ENCODE measurements at regions of chr1 and their contacts with region 1.

Region 1: GRCh38 chr1:230978491-230979388 is at the starts of genes ARV1 and TTC13:
- DNase-seq: peak; percentile 99
- H3K4me3 Mint-ChIP-seq: peak within 1 kb of the TSS; percentile 89
- H3K27ac Mint-ChIP-seq: peak within 1 kb of the TSS; percentile 92
- H3K4me1 Mint-ChIP-seq: peaks cover 31% of the 10 kb centered on the region
- H3K27me3 Mint-ChIP-seq: no peaks in the 10 kb centered on the region
- total RNA-seq, gene ARV1: 15.0 and 15.2 TPM in 2 replicates
- total RNA-seq, gene TTC13: 22.7 and 23.8 TPM in 2 replicates

Region 2: GRCh38 chr1:230642263-230642959 is 336.3 kb before region 1 on chr1 and contains the start of gene COG2:
- intact Hi-C with region 1: loop called (anchors 1 kb)
- DNase-seq: peak; percentile 99
- H3K4me3 Mint-ChIP-seq: peak within 1 kb of the TSS; percentile 96
- H3K27ac Mint-ChIP-seq: peak within 1 kb of the TSS; percentile 98
- H3K4me1 Mint-ChIP-seq: peaks cover 35% of the 10 kb centered on the region
- H3K27me3 Mint-ChIP-seq: peaks cover 18% of the 10 kb centered on the region
- total RNA-seq, gene COG2: 44.1 and 47.4 TPM in 2 replicates

Region 3: GRCh38 chr1:230917284-230918135 is 61.2 kb before region 1 on chr1:
- intact Hi-C with region 1: loop called (anchors 1 kb)
- DNase-seq: peak; percentile 91
- H3K4me3 Mint-ChIP-seq: no peak overlapping the region
- H3K27ac Mint-ChIP-seq: no peak overlapping the region
- H3K4me1 Mint-ChIP-seq: peaks cover 7% of the 10 kb centered on the region
- H3K27me3 Mint-ChIP-seq: no peaks in the 10 kb centered on the region

Region 4: GRCh38 chr1:231240883-231241735 is 262.4 kb after region 1 on chr1 and contains the start of gene GNPAT:
- intact Hi-C with region 1: loop called (anchors 1 kb)
- DNase-seq: peak; percentile 98
- H3K4me3 Mint-ChIP-seq: peak within 1 kb of the TSS; percentile 94
- H3K27ac Mint-ChIP-seq: peak within 1 kb of the TSS; percentile 97
- H3K4me1 Mint-ChIP-seq: peaks cover 52% of the 10 kb centered on the region
- H3K27me3 Mint-ChIP-seq: no peaks in the 10 kb centered on the region
- total RNA-seq, gene GNPAT: 45.6 and 47.5 TPM in 2 replicates

Region 5: DNA sequence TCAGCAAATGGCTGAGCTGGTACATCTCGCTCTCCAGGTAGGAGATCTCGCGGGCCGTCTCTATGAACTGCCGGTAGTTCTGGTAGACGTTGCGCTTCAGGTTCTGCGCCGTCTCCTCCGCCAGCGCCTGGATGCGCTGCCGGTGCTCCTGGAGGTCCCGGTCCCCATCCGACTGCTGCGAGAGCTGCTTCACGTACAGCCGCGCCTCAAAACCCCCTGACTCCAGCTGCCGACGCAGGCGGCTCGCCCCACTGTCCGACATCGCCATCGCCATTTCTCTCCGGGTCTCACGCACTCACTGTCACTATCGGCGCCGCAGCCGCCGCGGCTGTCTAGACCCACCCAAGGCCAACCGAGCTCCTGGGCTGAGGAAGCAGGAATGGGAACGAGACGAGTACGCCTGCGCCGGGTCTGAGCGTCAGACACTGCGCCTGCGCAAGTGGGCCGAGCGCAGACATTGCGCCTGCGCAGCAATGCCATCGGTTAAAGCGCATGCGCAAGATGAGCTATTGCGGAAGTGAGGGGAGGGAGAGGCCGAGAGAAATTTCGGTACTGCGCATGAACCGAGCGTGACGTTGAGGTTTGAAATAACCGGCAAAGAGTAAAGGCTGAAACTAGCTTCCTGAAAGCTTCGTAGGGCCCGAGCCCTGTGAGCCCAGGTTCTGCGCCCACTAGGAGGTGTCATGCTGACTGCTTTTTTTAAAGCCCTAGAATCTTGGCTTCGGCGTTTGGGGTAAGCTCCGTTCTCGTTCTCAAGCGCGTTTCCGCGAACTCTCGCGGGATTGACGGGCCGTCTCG is 358.9 kb after region 1 on chr1 and contains the start of gene EXOC8:
- intact Hi-C with region 1: loop called (anchors 10 kb)
- DNase-seq: peak; percentile 100
- H3K4me3 Mint-ChIP-seq: peak within 1 kb of the TSS; percentile 95
- H3K27ac Mint-ChIP-seq: peak within 1 kb of the TSS; percentile 98
- H3K4me1 Mint-ChIP-seq: peaks cover 44% of the 10 kb centered on the region
- H3K27me3 Mint-ChIP-seq: peaks cover 3% of the 10 kb centered on the region
- total RNA-seq, gene EXOC8: 12.4 and 13.3 TPM in 2 replicates

Region 6: DNA sequence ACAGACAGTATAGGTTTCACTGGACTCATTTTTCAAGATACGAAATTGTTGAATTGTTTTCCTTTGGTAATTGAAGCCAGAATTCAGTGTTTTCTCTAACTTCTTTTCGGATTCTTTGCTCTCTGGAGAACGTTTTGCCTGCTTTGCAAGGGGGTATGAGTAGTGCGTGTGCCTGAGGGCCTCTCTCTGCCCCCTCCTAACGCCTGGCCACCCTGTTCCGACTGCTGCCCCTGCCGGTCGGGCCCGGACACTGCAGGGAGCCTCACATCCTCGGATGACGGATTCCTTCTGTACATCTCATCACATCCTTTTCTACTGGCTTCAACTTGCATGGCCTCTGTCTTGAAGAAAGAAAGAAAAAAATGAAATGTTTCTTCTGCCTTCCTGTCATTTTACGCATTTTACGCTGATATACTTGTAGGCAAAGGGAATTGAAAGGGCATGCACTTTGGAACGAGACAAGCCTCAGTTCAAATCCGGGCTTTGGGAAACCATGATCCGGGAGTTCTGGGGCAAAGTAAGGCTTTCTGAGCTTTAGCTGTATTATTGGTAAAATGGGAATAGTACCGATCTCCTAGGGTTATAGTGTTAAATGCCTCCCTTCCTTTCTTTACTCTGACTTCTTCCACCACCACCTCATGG is 713.0 kb after region 1 on chr1:
- intact Hi-C with region 1: no loop called
- DNase-seq: no peak
- H3K4me3 Mint-ChIP-seq: no peak overlapping the region
- H3K27ac Mint-ChIP-seq: no peak overlapping the region
- H3K4me1 Mint-ChIP-seq: peaks cover 3% of the 10 kb centered on the region
- H3K27me3 Mint-ChIP-seq: no peaks in the 10 kb centered on the region

Region 7: DNA sequence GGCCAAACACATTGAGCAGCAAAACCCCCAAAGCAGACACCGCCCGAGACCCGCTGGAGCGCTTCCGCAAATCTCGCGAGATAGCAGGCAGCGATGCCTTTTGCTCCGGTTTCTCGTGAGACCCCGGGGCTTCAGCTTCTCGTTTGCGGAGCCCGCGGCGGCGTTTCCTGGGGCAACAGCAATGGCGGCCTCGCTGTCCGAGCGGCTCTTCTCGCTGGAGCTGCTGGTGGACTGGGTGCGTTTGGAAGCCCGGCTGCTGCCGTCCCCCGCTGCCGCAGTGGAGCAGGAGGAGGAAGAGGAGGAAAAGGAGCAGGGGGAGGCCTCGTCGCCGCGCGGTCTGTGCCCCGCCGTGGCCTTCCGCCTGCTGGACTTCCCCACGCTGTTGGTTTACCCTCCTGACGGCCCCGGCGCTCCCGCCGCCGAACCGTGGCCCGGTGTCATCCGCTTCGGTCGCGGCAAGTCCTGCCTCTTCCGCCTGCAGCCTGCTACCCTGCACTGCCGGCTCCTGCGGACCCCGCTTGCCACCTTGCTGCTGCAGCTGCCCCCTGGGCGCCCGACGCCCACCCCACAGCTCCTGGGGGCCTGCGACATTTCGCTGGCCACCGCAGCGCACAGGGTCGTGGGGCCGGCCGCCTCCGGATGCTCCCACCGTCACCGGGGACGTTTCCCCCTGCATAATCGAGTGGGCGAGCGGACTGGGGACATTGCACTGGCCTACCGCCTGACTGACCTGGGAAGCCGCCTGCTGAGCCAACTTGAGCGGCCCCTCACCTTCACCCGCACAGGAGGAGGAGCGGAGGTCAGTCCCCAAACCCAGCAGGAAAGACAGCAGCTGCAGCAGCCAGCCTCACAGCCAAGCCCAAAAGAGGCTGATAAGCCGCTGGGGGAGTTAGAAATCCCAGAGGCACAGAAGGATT is 1826.8 kb after region 1 on chr1 and contains the start of gene MAP10:
- intact Hi-C with region 1: loop called (anchors 5 kb)
- DNase-seq: peak; percentile 94
- H3K4me3 Mint-ChIP-seq: peak within 1 kb of the TSS; percentile 91
- H3K27ac Mint-ChIP-seq: peak within 1 kb of the TSS; percentile 86
- H3K4me1 Mint-ChIP-seq: peaks cover 27% of the 10 kb centered on the region
- H3K27me3 Mint-ChIP-seq: peaks cover 10% of the 10 kb centered on the region
- total RNA-seq, gene MAP10: 2.6 and 2.7 TPM in 2 replicates

Measured in activated CD4-positive, alpha-beta T cell treated with anti-CD3 and anti-CD28 coated beads, Interleukin-2, amount 10 ng/mL, durations not matched to agents 24 days and 14 days (primary cell).